ENCODE measurements at regions of chr2 and their contacts with region 1.

Region 1: GRCh38 chr2:165609672-165610071 is 140.2 kb downstream of the CSRNP3 start:
- DNase-seq: no peak
- H3K4me3 ChIP-seq: peak overlapping the region; percentile 28
- H3K27ac ChIP-seq: peak overlapping the region; percentile 86
- H3K4me1 ChIP-seq: peaks cover 54% of the 10 kb centered on the region
- H3K27me3 ChIP-seq: no peaks in the 10 kb centered on the region
- CTCF ChIP-seq: no peak

Region 2: DNA sequence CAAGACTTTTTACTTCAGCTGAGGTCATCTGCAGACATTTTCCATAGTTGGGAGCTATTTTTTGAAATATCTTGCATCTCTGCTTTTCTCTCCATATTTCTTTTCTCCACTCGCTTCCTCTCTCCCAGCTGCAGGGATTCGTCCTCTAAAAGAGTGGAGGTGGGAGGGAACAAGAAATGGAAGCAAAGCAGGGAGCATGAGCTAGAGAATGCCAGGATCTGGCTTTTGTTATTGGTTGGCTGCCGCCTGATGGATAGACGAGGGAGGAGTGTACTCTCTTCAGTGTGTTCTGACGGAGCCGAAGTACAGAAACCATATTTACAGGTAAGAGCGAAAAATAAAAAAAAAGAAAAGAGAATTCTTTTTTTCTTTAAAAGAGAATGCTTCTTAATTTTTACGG is 140.3 kb before region 1 on chr2 and contains the start of gene CSRNP3:
- CTCF ChIA-PET with region 1: no interaction called
- POLR2A ChIA-PET with region 1: interaction called, 11 read pairs
- intact Hi-C with region 1: no loop called
- DNase-seq: peak; percentile 96
- H3K4me3 ChIP-seq: peak within 1 kb of the TSS; percentile 59
- H3K27ac ChIP-seq: peak within 1 kb of the TSS; percentile 51
- H3K4me1 ChIP-seq: peaks cover 42% of the 10 kb centered on the region
- H3K27me3 ChIP-seq: no peaks in the 10 kb centered on the region
- CTCF ChIP-seq: no peak; the same call in 1 of the 2 replicates
- total RNA-seq, gene CSRNP3: 39.5 and 47.7 TPM in 2 replicates

Region 3: GRCh38 chr2:166417669-166418068 is 808.0 kb after region 1 on chr2:
- CTCF ChIA-PET with region 1: no interaction called
- POLR2A ChIA-PET with region 1: no interaction called
- intact Hi-C with region 1: no loop called
- DNase-seq: peak; percentile 78
- H3K4me3 ChIP-seq: no peak overlapping the region
- H3K27ac ChIP-seq: no peak overlapping the region
- H3K4me1 ChIP-seq: no peaks in the 10 kb centered on the region
- H3K27me3 ChIP-seq: no peaks in the 10 kb centered on the region
- CTCF ChIP-seq: peak; percentile 57

Measured in A673 (cell line).